AG04449 (cell line): ENCODE measurements at regions of chr7 and their contacts with region 1.

Region 1: GRCh38 chr7:142811154-142811737 is 40.5 kb downstream of the PRSS2 start:
- DNase-seq: no peak
- H3K4me3 ChIP-seq: no peak overlapping the region
- CTCF ChIP-seq: peak; percentile 41

Region 2: DNA sequence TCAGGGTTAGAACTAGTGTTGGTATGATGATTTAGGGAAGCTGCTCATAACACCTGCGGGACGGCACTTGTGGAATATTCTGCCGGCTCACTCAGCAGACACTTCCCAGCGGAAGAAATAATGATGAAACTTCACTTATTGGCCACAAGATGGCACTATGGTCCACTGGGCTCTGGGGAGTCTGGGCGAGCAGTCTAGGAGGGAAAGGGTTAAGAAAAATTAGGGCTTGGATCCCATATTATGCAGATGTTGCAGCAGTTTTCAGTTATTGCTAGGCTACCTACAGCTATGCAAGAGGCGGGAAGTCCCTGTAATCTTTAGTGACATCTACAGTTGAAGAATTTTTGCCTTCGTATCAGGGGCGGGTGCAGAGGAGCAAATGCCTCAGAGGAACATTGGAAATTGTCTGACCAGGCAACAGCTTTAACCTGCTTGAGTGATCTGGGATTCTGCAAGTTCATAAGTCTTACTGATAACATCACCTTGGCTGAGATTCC is 314.7 kb before region 1 on chr7:
- CTCF ChIA-PET with region 1: interaction called, 21 read pairs
- POLR2A ChIA-PET with region 1: no interaction called
- DNase-seq: no peak
- H3K4me3 ChIP-seq: no peak overlapping the region
- CTCF ChIP-seq: peak; percentile 73

Region 3: DNA sequence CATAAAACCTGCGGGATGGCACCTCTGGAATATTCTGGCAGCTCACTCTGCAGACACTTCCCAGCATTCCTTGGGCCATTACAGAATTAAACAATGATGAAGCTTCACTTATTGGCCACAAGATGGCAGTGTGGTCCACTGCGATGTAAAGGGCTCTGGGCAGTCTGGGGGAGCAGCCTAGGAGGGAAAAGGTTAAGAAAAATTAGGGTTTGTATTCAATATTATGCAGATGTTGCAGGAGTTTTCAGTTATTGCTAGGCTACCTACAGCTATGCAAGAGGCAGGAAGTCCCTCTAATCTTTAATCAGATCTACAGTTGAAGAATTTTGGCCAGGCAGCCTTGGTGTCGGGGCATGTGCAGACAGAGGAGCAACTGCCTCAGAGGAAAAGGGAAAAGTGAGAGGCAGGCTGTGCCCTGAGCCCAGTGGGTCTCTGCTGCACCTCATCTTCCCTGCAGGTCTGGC is 295.2 kb before region 1 on chr7:
- CTCF ChIA-PET with region 1: interaction called, 58 read pairs
- POLR2A ChIA-PET with region 1: no interaction called
- DNase-seq: peak; percentile 29
- H3K4me3 ChIP-seq: no peak overlapping the region
- CTCF ChIP-seq: peak; percentile 68

Region 4: GRCh38 chr7:142603870-142604448 is 207.3 kb before region 1 on chr7:
- CTCF ChIA-PET with region 1: interaction called, 20 read pairs
- POLR2A ChIA-PET with region 1: no interaction called
- DNase-seq: no peak
- H3K4me3 ChIP-seq: no peak overlapping the region; the same call in 1 of the 2 replicates
- CTCF ChIP-seq: peak; percentile 70

Region 5: GRCh38 chr7:142632291-142633134 is 178.7 kb before region 1 on chr7:
- CTCF ChIA-PET with region 1: interaction called, 56 read pairs
- POLR2A ChIA-PET with region 1: no interaction called
- DNase-seq: no peak
- H3K4me3 ChIP-seq: no peak overlapping the region
- CTCF ChIP-seq: peak; percentile 65

Region 6: DNA sequence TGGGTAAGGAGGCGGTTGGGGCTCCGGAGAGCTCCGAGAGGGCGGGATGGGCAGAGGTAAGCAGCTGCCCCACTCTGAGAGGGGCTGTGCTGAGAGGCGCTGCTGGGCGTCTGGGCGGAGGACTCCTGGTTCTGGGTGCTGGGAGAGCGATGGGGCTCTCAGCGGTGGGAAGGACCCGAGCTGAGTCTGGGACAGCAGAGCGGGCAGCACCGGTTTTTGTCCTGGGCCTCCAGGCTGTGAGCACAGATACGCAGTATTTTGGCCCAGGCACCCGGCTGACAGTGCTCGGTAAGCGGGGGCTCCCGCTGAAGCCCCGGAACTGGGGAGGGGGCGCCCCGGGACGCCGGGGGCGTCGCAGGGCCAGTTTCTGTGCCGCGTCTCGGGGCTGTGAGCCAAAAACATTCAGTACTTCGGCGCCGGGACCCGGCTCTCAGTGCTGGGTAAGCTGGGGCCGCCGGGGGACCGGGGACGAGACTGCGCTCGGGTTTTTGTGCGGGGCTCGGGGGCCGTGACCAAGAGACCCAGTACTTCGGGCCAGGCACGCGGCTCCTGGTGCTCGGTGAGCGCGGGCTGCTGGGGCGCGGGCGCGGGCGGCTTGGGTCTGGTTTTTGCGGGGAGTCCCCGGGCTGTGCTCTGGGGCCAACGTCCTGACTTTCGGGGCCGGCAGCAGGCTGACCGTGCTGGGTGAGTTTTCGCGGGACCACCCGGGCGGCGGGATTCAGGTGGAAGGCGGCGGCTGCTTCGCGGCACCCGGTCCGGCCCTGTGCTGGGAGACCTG is 14.4 kb before region 1 on chr7:
- CTCF ChIA-PET with region 1: interaction called, 90 read pairs
- POLR2A ChIA-PET with region 1: no interaction called
- DNase-seq: no peak
- H3K4me3 ChIP-seq: peak overlapping the region; percentile 57
- CTCF ChIP-seq: no peak